ENCODE measurements at regions of chr15 and their contacts with region 1.

Region 1: GRCh38 chr15:79853458-79854328 is 43.1 kb downstream of the MTHFS start:
- DNase-seq: peak; percentile 67
- H3K4me3 Mint-ChIP-seq: no peak overlapping the region
- H3K27ac Mint-ChIP-seq: no peak overlapping the region
- H3K4me1 Mint-ChIP-seq: peaks cover 12% of the 10 kb centered on the region
- H3K27me3 Mint-ChIP-seq: no peaks in the 10 kb centered on the region

Region 2: GRCh38 chr15:79380755-79381497 is 472.8 kb before region 1 on chr15:
- CTCF ChIA-PET with region 1: interaction called, 63 read pairs
- POLR2A ChIA-PET with region 1: no interaction called
- DNase-seq: peak; percentile 76
- H3K4me3 Mint-ChIP-seq: no peak overlapping the region
- H3K27ac Mint-ChIP-seq: no peak overlapping the region
- H3K4me1 Mint-ChIP-seq: peaks cover 3% of the 10 kb centered on the region
- H3K27me3 Mint-ChIP-seq: no peaks in the 10 kb centered on the region

Region 3: GRCh38 chr15:79769069-79769481 is 84.6 kb before region 1 on chr15:
- CTCF ChIA-PET with region 1: interaction called, 11 read pairs
- POLR2A ChIA-PET with region 1: no interaction called
- DNase-seq: no peak
- H3K4me3 Mint-ChIP-seq: no peak overlapping the region
- H3K27ac Mint-ChIP-seq: no peak overlapping the region
- H3K4me1 Mint-ChIP-seq: no peaks in the 10 kb centered on the region
- H3K27me3 Mint-ChIP-seq: peaks cover 13% of the 10 kb centered on the region

Region 4: DNA sequence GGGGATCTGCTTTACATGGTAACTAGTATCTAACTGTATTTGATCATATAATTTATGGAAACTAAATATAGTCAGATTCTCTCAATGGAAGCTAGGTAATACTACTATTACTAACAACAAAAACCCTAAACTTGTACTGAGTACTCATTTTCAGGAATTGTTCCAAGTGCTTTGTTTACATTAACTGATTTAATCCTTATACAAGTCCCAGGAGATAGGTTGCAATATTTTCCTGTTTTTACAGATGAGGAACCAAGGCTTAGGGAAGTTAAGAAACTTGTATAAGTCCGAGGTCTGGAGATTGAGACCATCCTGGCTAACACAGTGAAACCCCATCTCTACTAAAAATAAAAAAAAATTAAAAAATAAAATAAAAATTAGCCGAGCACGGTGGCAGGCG is 50.6 kb after region 1 on chr15:
- CTCF ChIA-PET with region 1: no interaction called
- POLR2A ChIA-PET with region 1: no interaction called
- DNase-seq: no peak
- H3K4me3 Mint-ChIP-seq: no peak overlapping the region
- H3K27ac Mint-ChIP-seq: no peak overlapping the region
- H3K4me1 Mint-ChIP-seq: peaks cover 24% of the 10 kb centered on the region
- H3K27me3 Mint-ChIP-seq: no peaks in the 10 kb centered on the region

Region 5: GRCh38 chr15:79970624-79971434 is 117.1 kb after region 1 on chr15 and contains the start of gene BCL2A1:
- CTCF ChIA-PET with region 1: interaction called, 10 read pairs
- POLR2A ChIA-PET with region 1: interaction called, 3 read pairs
- DNase-seq: peak; percentile 59
- H3K4me3 Mint-ChIP-seq: peak within 1 kb of the TSS; percentile 83
- H3K27ac Mint-ChIP-seq: peak within 1 kb of the TSS; percentile 76
- H3K4me1 Mint-ChIP-seq: peaks cover 59% of the 10 kb centered on the region
- H3K27me3 Mint-ChIP-seq: no peaks in the 10 kb centered on the region
- total RNA-seq, gene BCL2A1: 12.3 to 14.1 TPM

Region 6: GRCh38 chr15:80173022-80173759 is 319.5 kb after region 1 on chr15:
- CTCF ChIA-PET with region 1: interaction called, 14 read pairs
- POLR2A ChIA-PET with region 1: no interaction called
- DNase-seq: peak; percentile 78
- H3K4me3 Mint-ChIP-seq: no peak overlapping the region
- H3K27ac Mint-ChIP-seq: no peak overlapping the region
- H3K4me1 Mint-ChIP-seq: no peaks in the 10 kb centered on the region
- H3K27me3 Mint-ChIP-seq: no peaks in the 10 kb centered on the region